GM13976 (cell line): ENCODE measurements at regions of chr2 and their contacts with region 1.

Region 1: GRCh38 chr2:111705711-111706336 is 178.2 kb downstream of the ANAPC1 start:
- DNase-seq: peak; percentile 61
- CTCF ChIP-seq: no peak

Region 2: DNA sequence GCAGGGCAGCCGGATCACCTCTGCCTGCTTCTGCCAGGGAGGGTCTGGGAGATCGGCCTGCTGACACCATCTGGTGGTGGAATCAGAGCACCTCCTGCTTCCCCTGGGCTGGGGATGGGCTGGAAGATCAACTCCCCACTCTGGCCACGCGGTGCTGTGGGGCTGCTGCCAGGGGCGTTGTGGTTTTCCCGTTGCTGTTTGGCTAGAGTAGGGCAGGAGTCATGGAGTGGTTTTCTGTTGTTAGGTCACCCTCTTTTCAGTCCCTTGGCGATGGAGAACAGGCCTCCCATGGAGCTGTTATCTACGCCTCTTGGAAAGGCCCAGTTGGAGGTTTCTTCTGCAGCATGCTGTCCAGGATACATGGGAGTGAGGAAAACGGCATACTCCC is 569.9 kb before region 1 on chr2:
- in situ Hi-C with region 1: loop called (anchors 25 kb)
- DNase-seq: no peak
- CTCF ChIP-seq: peak; percentile 22